ENCODE measurements at regions of chr11 and their contacts with region 1.

Region 1: DNA sequence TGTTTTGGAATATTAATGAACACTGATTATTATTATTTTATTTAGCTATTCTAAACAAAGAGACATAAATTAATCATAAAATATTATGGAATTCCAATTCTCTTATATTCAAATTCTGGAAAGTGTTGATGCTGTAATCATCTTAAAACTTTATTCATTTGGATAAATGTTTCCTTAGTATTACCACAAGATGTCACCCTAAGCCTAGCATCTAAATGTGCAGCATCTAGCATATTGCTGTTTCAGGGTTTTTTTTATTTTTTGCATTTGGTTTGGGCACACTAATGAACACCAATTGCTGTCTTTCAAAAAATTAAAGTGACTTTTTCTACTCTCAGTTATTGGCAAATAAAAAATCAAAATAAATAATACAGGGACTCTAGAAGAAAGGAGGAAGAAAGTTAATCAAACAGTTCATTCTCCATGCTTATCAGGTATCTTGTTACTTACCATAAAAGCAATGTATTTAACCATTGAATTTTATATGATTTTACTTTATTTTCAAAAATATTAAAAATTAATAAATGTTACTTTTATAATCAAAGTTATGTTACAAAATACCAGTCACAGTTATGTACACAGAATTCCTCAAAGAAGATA is 31.8 kb downstream of the DLG2 start:
- DNase-seq: peak; percentile 49

Region 2: DNA sequence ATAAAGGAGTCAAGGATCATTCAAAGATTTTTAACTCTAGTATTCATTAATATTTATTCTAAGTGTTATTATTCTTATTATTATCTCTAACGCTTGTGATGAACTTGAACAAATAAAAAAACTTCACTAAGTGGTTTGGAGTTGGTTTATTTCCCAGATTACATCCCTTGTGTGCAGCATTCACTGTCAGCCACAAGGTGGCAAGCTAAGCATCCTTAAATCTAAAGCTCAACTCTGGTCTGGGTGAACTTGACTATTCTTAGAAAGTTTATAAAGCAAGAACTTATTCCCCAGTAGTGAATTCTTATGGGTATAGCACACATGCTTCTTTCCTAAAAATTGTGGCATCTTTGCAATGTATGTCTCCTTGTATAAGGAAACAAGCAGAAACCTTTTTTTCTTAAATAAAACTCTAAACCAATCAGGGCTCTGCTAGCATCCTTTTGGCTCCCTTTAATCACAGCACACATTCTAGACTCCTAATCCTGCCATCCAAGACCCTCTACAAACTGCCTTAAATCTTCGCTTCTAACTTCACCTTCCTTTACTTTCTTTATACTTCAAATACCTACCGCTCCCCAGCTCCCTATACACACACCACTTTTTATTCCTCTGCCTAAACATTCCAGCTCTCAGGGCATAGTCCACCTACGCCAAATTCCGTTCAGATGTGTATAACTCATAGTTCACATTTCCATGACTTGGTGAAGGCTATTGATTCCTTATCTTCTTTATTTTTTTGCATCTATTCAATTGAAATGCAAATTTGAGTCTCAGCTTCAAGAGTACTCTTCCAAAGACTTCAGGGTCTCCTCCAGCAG is 1037.1 kb before region 1 on chr11:
- in situ Hi-C with region 1: loop called (anchors 25 kb)
- DNase-seq: peak; percentile 58

Region 3: DNA sequence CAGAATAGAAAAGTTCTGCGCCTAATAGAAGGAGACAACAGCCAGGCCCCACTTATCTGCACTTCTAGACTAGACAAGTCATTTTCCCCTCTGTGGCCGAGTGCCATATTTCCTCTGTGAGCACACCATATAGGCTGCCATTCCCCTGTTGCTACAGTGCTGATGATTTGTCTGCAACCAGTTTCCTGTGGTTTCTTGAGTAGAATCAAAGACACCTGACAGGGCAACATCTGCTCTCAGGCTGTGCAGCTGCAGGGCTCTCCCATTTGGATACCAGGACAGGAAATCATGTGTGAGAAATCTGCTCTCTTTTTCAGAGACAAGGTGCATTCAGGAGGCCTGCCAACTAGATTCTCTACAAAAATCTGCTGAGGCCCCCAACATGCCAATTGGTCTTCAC is 847.5 kb before region 1 on chr11:
- in situ Hi-C with region 1: loop called (anchors 25 kb)
- DNase-seq: peak; percentile 89

Region 4: GRCh38 chr11:84947967-84948580 is 647.3 kb before region 1 on chr11:
- in situ Hi-C with region 1: loop called (anchors 25 kb)
- DNase-seq: peak; percentile 3

Measured in KBM-7 (cell line).